Transverse colon (tissue), 4 donors: ENCODE measurements at regions of chr16 and their contacts with region 1.

Region 1: DNA sequence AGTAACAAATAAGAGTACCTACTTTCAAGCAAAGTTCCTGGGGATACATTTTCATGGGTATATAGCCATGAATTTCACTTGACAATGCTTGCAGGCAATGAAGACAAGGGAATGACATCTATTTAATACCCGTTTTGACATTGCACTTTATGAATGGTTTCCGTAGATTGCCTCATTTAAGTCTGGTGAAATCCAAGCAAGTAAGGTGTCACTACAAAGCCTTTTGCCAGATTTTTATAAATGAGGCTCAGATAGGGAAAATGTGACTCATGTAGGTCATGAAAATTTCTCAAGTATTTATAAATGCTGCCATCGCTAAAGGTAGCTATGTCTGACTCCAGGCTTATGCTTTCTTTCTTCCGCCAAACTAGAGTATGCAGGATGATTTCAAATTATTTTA is 644.3 kb downstream of the CDH8 start:
- DNase-seq: no peak
- H3K4me3 ChIP-seq: no peak overlapping the region
- H3K27ac ChIP-seq: no peak overlapping the region
- H3K4me1 ChIP-seq: no peaks in the 10 kb centered on the region
- H3K27me3 ChIP-seq: no peaks in the 10 kb centered on the region
- CTCF ChIP-seq: no peak
- EP300 ChIP-seq: no peak
- POLR2A ChIP-seq: no peak

Region 2: DNA sequence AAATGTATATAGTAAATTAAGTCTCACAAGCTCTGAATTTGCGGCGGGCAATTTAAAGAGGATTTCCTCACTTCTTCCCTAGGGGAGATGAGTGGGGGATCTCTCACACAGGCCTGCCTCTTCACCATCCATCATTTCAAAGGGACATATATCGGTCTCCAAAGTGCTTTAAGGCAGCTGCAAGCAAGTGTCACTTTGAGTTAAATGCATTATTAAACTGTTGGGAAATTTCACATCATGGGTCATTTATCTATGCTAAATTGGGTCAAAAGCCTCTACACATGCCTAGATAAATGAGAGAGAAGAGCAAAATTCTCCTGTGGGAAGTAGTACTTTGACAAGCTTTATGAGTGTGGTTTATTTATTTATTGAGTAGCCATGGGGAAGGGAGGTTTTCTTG is 1551.7 kb before region 1 on chr16:
- in situ Hi-C with region 1: no loop called
- intact Hi-C with region 1: loop called (anchors 10 kb)
- DNase-seq: no peak
- H3K4me3 ChIP-seq: no peak overlapping the region
- H3K27ac ChIP-seq: no peak overlapping the region
- H3K4me1 ChIP-seq: no peaks in the 10 kb centered on the region
- H3K27me3 ChIP-seq: no peaks in the 10 kb centered on the region
- CTCF ChIP-seq: no peak
- EP300 ChIP-seq: no peak
- POLR2A ChIP-seq: no peak